Esophagus muscularis mucosa (tissue), 4 donors: ENCODE measurements at regions of chr6 and their contacts with region 1.

Region 1: GRCh38 chr6:3929281-3929798 is 80.2 kb downstream of the FAM50B start:
- DNase-seq: peak; percentile 92
- H3K4me3 ChIP-seq: no peak overlapping the region
- H3K27ac ChIP-seq: peak overlapping the region; percentile 63 to 78 (median 74)
- H3K4me1 ChIP-seq: peaks cover 8 to 52% (median 39%) of the 10 kb centered on the region in 4 donors
- H3K27me3 ChIP-seq: no peaks in the 10 kb centered on the region
- CTCF ChIP-seq: no peak
- EP300 ChIP-seq: no peak
- POLR2A ChIP-seq: no peak

Region 2: GRCh38 chr6:3500262-3501016 is 428.9 kb before region 1 on chr6:
- intact Hi-C with region 1: no loop called
- DNase-seq: no peak
- H3K4me3 ChIP-seq: no peak overlapping the region
- H3K27ac ChIP-seq: no peak overlapping the region
- H3K4me1 ChIP-seq: no peaks in the 10 kb centered on the region
- H3K27me3 ChIP-seq: no peaks in the 10 kb centered on the region
- CTCF ChIP-seq: no peak
- EP300 ChIP-seq: no peak
- POLR2A ChIP-seq: no peak

Region 3: DNA sequence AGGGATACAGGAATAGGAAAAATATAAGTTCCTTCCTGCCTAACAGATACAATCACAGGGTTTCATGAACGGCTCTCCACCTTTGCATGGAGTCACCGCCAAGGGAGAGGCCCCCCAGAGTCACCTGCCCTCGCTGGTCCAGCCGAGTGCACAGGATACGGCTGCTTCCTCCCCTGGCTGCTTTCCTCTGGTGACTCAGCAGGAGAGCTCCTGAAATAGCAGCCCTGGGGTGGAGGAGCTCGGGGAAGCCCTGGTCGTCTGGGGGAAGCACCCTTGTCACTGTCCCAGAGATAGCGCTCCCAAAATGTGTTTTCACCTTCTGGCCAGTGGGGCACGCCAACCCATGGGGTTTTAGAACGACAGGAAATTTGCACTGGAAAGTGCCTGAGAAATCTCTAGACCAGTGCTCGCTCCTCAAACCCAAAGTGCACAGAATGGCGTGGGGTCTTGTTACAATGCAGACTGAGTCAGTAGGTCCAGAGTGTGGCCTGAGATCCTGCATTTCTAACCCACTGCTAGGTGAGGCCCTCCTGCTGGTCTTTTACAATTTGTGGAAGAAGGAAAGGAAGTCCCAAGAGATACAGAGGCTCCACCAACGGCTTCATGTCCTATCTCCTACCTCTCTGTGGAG is 116.1 kb before region 1 on chr6:
- intact Hi-C with region 1: no loop called
- DNase-seq: no peak
- H3K4me3 ChIP-seq: no peak overlapping the region
- H3K27ac ChIP-seq: no peak overlapping the region
- H3K4me1 ChIP-seq: peaks cover 26 to 31% (median 29%) of the 10 kb centered on the region in 4 donors
- H3K27me3 ChIP-seq: no peaks in the 10 kb centered on the region
- CTCF ChIP-seq: no peak
- EP300 ChIP-seq: no peak
- POLR2A ChIP-seq: no peak

Region 4: DNA sequence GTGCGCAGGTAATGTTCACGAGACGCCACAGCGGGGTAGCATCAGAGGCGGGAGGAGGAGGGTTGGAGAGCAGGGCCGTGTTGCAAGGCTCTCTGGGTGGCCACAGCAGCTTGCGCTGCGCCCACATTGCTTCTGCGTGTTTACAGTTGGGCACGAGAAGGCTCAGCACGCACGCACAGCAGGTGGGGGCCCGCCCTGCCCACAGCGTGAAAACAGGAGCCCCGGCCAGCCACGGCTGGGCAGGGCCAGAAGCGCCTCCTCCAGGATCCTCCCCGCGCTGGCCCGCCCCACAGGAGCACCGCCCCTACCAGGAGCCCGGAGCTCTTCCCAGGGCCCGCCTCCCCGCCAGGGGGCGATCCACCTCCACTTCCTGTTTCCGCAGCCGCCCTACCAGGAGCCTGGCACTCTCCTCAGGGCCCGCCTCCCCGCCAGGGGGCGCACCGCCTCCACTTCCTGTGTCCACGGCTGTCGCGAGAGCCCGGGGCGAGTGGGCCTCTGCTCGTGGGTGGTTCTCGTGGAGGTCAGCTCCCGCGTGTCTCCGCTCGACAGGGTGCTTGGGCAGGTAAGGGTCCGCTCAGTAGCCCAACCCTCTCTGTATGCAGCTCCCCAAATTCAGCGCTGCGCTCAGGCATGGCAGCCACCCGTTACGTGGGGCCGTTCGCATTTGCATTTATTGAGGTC is 80.3 kb before region 1 on chr6 and contains the start of gene FAM50B:
- intact Hi-C with region 1: loop called (anchors 1 kb)
- DNase-seq: peak; percentile 97
- H3K4me3 ChIP-seq: peak within 1 kb of the TSS; percentile 55 to 64 (median 56)
- H3K27ac ChIP-seq: peak within 1 kb of the TSS; percentile 70 to 83 (median 74)
- H3K4me1 ChIP-seq: peaks cover 0 to 24% (median 22%) of the 10 kb centered on the region in 4 donors
- H3K27me3 ChIP-seq: no peaks in the 10 kb centered on the region
- CTCF ChIP-seq: peak; percentile 94 to 97 (median 97)
- EP300 ChIP-seq: no peak
- POLR2A ChIP-seq: no peak
- total RNA-seq, gene FAM50B: 12.5 to 26.6 (median 17.6) TPM